Naive thymus-derived CD4-positive, alpha-beta T cell (primary cell): ENCODE measurements at regions of chr1 and their contacts with region 1.

Region 1: GRCh38 chr1:1033009-1033587 is 13.2 kb downstream of the AGRN start:
- DNase-seq: peak; percentile 67 to 93 (median 79)
- ATAC-seq: peak; percentile 94
- H3K4me3 ChIP-seq: peak overlapping the region; percentile 43
- H3K4me3 Mint-ChIP-seq: peak overlapping the region in 7 of 10 donors; percentile 39 to 76 (median 62)
- H3K27ac ChIP-seq: no peak overlapping the region
- H3K27ac Mint-ChIP-seq: peak overlapping the region in 1 of 9 donors; percentile 52
- H3K4me1 ChIP-seq: peaks cover 0 to 5% of the 10 kb centered on the region in 2 donors
- H3K4me1 Mint-ChIP-seq: peaks cover 0 to 8% (median 6%) of the 10 kb centered on the region in 7 donors
- H3K27me3 ChIP-seq: peaks cover 0 to 16% of the 10 kb centered on the region in 2 donors
- H3K27me3 Mint-ChIP-seq: peaks cover 3 to 23% (median 14%) of the 10 kb centered on the region in 5 donors

Region 2: DNA sequence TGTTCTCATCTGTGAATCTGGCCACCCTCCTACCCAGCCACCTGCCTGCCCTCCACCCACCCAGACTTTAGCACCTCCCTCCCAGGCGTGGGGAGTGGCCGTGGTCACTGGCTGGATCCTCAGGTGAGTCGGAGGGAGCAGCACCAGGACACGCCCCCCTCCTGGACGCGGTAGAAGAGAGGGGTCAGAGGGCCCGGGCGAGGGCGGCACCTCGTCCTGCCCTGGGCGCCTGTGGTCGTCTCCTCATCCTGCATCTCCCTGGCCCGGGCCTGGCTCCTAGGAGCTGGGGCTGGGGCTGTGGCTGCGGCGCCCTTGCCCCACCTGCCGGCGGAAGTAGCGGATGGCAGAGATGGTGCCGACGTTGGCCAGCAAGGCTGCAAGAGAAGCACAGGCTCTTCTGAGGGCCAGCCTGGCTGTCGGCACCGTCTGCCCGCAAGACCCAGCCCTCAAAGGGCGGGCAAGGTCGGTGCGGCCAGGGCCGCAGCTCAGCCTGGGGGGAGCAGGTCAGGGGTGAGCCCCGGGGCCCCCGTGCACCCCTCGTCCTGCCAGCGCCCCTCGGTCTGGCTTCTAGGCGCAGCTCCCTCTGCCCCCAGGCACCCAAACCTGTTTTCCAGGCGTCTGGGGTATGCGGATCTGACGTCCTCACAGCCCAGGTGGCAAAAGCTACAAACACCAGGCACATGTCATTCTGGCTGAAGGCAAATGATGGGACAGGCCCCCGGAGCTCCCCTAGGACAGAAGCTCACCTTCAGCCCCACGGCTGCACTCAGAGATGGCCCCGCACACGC is 57.0 kb before region 1 on chr1:
- CTCF ChIA-PET with region 1: no interaction called
- POLR2A ChIA-PET with region 1: no interaction called
- intact Hi-C with region 1: no loop called
- DNase-seq: peak; percentile 39 to 72 (median 63)
- ATAC-seq: peak; percentile 80
- H3K4me3 ChIP-seq: peak overlapping the region; percentile 44
- H3K4me3 Mint-ChIP-seq: peak overlapping the region in 6 of 10 donors; percentile 9 to 54 (median 21)
- H3K27ac ChIP-seq: no peak overlapping the region
- H3K27ac Mint-ChIP-seq: no peak overlapping the region
- H3K4me1 ChIP-seq: peaks cover 0 to 10% of the 10 kb centered on the region in 2 donors
- H3K4me1 Mint-ChIP-seq: peaks cover 0 to 8% (median 4%) of the 10 kb centered on the region in 7 donors
- H3K27me3 ChIP-seq: peaks cover 0 to 3% of the 10 kb centered on the region in 2 donors
- H3K27me3 Mint-ChIP-seq: peaks cover 0 to 16% (median 9%) of the 10 kb centered on the region in 5 donors

Region 3: GRCh38 chr1:1013105-1013921 is 19.8 kb before region 1 on chr1 and contains the start of gene ISG15:
- CTCF ChIA-PET with region 1: interaction called, 9 read pairs
- POLR2A ChIA-PET with region 1: interaction called, 5 read pairs
- intact Hi-C with region 1: loop called in 1 of 2 experiments (anchors 1 kb)
- DNase-seq: peak; percentile 73 to 90 (median 85)
- ATAC-seq: peak; percentile 98
- H3K4me3 ChIP-seq: peak within 1 kb of the TSS; percentile 95
- H3K4me3 Mint-ChIP-seq: peak within 1 kb of the TSS; percentile 89 to 100 (median 96)
- H3K27ac ChIP-seq: peak within 1 kb of the TSS; percentile 83
- H3K27ac Mint-ChIP-seq: peak within 1 kb of the TSS; percentile 96 to 100 (median 99)
- H3K4me1 ChIP-seq: peaks cover 13 to 18% of the 10 kb centered on the region in 2 donors
- H3K4me1 Mint-ChIP-seq: peaks cover 19 to 35% (median 29%) of the 10 kb centered on the region in 7 donors
- H3K27me3 ChIP-seq: no peaks in the 10 kb centered on the region
- H3K27me3 Mint-ChIP-seq: peaks cover 0 to 4% (median 1%) of the 10 kb centered on the region in 5 donors
- total RNA-seq, gene ISG15: 17.4 to 227 (median 25.4) TPM

Region 4: DNA sequence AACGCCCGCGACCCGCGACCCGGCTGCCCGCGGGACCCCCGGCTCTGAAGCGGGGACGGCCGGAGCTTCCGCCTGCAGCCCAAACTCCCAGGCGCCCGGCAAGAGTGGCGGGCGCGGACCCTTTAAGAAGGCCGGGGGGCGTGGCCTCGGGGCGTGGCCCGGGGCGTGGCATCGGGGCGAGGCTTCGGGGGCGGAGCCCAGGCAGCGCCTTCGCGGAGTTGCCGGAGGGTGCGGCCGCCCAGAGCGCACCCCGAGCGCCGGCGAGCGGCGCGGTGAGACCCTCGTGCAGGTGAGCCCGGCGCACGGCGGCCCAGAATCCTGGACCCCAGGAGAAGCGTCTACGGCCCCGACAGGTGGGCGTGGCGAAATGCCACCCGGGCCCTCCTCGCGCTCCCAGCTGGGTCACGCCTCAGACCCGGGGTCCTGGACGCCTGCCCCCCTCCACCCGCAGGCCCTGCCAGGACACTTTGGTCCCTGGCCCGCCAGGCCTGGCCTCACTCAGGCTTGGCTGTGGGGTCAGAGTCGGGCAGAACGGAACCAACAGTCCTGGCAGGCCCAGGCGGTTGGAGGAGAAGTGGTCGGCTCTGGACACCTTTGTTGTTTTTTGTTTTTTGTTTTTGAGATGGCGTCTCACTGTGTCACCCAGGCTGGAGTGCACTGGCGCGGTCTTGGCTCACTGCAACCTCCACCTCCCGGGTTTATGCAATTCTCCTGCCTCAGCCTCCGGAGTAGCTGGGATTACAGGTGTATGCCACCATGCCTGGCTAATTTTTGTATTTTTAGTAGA is 26.6 kb after region 1 on chr1:
- CTCF ChIA-PET with region 1: interaction called, 16 read pairs
- POLR2A ChIA-PET with region 1: no interaction called
- intact Hi-C with region 1: loop called (anchors 1 kb)
- DNase-seq: peak; percentile 80 to 94 (median 87)
- ATAC-seq: peak; percentile 92
- H3K4me3 ChIP-seq: peak overlapping the region; percentile 43
- H3K4me3 Mint-ChIP-seq: peak overlapping the region in 8 of 10 donors; percentile 29 to 84 (median 52)
- H3K27ac ChIP-seq: no peak overlapping the region
- H3K27ac Mint-ChIP-seq: peak overlapping the region in 1 of 9 donors; percentile 38
- H3K4me1 ChIP-seq: peaks cover 4 to 22% of the 10 kb centered on the region in 2 donors
- H3K4me1 Mint-ChIP-seq: peaks cover 0 to 19% (median 5%) of the 10 kb centered on the region in 7 donors
- H3K27me3 ChIP-seq: peaks cover 3 to 16% of the 10 kb centered on the region in 2 donors
- H3K27me3 Mint-ChIP-seq: peaks cover 7 to 35% (median 13%) of the 10 kb centered on the region in 5 donors

Region 5: DNA sequence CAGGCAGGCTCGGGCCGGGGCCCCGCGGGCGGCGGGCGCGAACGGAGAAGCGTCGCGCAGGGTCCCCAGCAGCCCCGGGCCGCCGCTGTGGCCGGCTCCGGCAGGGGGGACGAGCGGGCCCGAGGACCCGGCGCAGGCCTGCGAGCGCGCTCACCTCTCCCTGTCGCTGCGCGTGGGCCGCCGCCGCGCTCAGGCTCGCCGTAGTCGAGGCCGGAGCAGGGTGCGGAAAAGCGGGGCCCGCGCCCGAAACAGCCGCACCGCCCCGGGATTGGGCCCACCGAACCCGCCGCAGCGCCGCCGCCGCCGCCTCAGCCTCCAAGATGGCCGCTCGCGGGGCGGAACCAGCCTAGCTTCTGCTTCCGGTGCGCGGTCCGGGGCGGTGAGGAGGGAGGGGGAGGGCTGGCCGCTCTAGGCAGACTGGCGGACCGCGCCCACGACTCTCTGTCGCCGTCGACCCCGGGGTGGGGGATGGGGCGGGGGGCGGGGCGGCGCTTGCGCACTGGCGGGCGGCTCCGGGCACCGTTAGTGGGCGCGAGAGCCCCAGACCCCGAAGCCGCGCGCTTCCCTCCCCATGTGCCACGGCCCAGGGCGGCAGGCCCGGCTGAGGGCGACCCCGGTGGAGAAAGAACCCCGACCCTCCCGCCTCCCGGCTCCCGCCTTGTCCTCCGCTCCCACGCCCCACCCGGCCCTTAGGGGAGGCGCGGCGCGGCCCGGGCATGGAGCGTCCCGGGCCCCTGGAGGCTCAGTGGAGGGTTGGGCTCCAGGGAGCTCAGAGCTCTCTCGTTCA is 240.6 kb after region 1 on chr1 and contains the start of gene UBE2J2:
- CTCF ChIA-PET with region 1: no interaction called
- POLR2A ChIA-PET with region 1: no interaction called
- intact Hi-C with region 1: loop called in 1 of 2 experiments (anchors 5 kb)
- DNase-seq: peak; percentile 83 to 92 (median 90)
- ATAC-seq: peak; percentile 99
- H3K4me3 ChIP-seq: peak within 1 kb of the TSS; percentile 77
- H3K4me3 Mint-ChIP-seq: peak within 1 kb of the TSS; percentile 79 to 92 (median 88)
- H3K27ac ChIP-seq: peak within 1 kb of the TSS; percentile 90
- H3K27ac Mint-ChIP-seq: peak within 1 kb of the TSS; percentile 36 to 94 (median 83)
- H3K4me1 ChIP-seq: peaks cover 28 to 39% of the 10 kb centered on the region in 2 donors
- H3K4me1 Mint-ChIP-seq: peaks cover 21 to 45% (median 35%) of the 10 kb centered on the region in 7 donors
- H3K27me3 ChIP-seq: no peaks in the 10 kb centered on the region
- H3K27me3 Mint-ChIP-seq: no peaks in the 10 kb centered on the region
- total RNA-seq, gene UBE2J2: 62.3 to 89.3 (median 75.1) TPM

Region 6: GRCh38 chr1:1441002-1441888 is 408.1 kb after region 1 on chr1:
- CTCF ChIA-PET with region 1: no interaction called
- POLR2A ChIA-PET with region 1: no interaction called
- intact Hi-C with region 1: loop called in 1 of 2 experiments (anchors 1 kb)
- DNase-seq: peak in 8 of 9 donors; percentile 26 to 72 (median 48)
- ATAC-seq: peak; percentile 89
- H3K4me3 ChIP-seq: no peak overlapping the region
- H3K4me3 Mint-ChIP-seq: peak overlapping the region in 1 of 10 donors; percentile 23
- H3K27ac ChIP-seq: no peak overlapping the region
- H3K27ac Mint-ChIP-seq: no peak overlapping the region
- H3K4me1 ChIP-seq: peaks cover 0 to 4% of the 10 kb centered on the region in 2 donors
- H3K4me1 Mint-ChIP-seq: peaks cover 0 to 6% (median 0%) of the 10 kb centered on the region in 7 donors
- H3K27me3 ChIP-seq: peaks cover 0 to 18% of the 10 kb centered on the region in 2 donors
- H3K27me3 Mint-ChIP-seq: peaks cover 0 to 4% (median 2%) of the 10 kb centered on the region in 5 donors